ENCODE measurements at regions of chr3 and their contacts with region 1.

Region 1: GRCh38 chr3:175558261-175558660 is 699.1 kb downstream of the NAALADL2 start:
- DNase-seq: no peak
- ATAC-seq: no peak
- H3K4me3 ChIP-seq: no peak overlapping the region
- H3K4me3 Mint-ChIP-seq: no peak overlapping the region
- H3K27ac ChIP-seq: no peak overlapping the region
- H3K27ac Mint-ChIP-seq: no peak overlapping the region
- H3K4me1 ChIP-seq: no peaks in the 10 kb centered on the region
- H3K4me1 Mint-ChIP-seq: no peaks in the 10 kb centered on the region
- H3K27me3 ChIP-seq: no peaks in the 10 kb centered on the region
- H3K27me3 Mint-ChIP-seq: no peaks in the 10 kb centered on the region

Region 2: GRCh38 chr3:175146258-175146657 is 412.0 kb before region 1 on chr3:
- CTCF ChIA-PET with region 1: no interaction called
- POLR2A ChIA-PET with region 1: interaction called in 1 of 2 experiments, 10 read pairs
- DNase-seq: no peak
- ATAC-seq: no peak
- H3K4me3 ChIP-seq: no peak overlapping the region
- H3K4me3 Mint-ChIP-seq: no peak overlapping the region
- H3K27ac ChIP-seq: no peak overlapping the region
- H3K27ac Mint-ChIP-seq: no peak overlapping the region
- H3K4me1 ChIP-seq: no peaks in the 10 kb centered on the region
- H3K4me1 Mint-ChIP-seq: no peaks in the 10 kb centered on the region
- H3K27me3 ChIP-seq: no peaks in the 10 kb centered on the region
- H3K27me3 Mint-ChIP-seq: no peaks in the 10 kb centered on the region

Region 3: DNA sequence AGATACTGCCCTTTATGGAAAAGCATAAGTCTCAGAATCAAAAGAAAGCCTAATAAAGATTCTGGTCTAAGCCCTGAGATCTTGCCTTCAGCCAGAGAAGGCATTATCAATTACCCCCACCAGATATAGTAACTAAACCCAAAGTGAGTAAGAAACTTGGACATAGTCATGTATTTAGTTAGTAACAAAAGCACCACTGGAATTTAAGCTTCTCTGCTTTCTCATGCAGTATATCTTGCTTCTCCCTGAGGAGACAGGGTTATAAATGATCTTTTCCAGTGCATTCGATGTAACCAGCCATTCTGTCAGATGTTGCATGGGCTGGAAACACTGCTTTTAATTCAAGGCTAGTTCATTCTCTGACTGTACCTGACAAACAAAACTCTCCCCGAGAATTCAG is 247.6 kb after region 1 on chr3:
- CTCF ChIA-PET with region 1: no interaction called
- POLR2A ChIA-PET with region 1: no interaction called
- DNase-seq: no peak
- ATAC-seq: no peak
- H3K4me3 ChIP-seq: no peak overlapping the region
- H3K4me3 Mint-ChIP-seq: no peak overlapping the region
- H3K27ac ChIP-seq: no peak overlapping the region
- H3K27ac Mint-ChIP-seq: no peak overlapping the region
- H3K4me1 ChIP-seq: no peaks in the 10 kb centered on the region
- H3K4me1 Mint-ChIP-seq: no peaks in the 10 kb centered on the region
- H3K27me3 ChIP-seq: no peaks in the 10 kb centered on the region
- H3K27me3 Mint-ChIP-seq: no peaks in the 10 kb centered on the region

Region 4: DNA sequence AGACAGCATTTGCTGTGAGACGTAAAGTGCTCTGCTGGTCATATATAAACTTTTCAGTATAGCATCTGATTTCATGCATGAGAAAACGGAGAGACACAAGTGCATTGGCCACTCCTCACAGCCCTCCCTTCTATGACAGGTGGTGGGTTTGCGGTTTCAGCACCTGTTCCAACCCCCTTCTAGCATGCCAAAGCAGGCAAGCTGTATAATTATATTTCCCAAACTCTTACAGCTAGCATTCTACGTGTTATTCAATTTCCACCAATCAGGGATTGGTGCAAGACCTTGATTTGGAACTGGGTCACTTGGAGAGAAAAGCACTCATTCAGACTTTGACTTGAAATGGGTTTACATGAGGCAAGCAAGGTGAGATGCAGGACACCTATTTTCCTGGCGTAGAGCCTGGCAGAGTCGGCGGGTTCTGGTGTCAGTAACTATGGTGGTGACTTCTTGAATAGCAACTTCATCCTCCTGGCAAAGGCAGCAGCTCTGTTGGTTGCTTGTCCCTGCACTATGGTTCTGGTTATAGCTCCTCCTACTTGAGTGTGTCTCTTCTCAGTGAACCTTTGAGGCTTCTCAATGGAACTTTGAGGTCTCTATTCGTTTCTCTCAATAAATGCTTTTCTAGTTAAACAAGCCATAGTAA is 1282.5 kb after region 1 on chr3:
- CTCF ChIA-PET with region 1: interaction called in 1 of 2 experiments, 10 read pairs
- POLR2A ChIA-PET with region 1: no interaction called
- DNase-seq: no peak
- ATAC-seq: no peak
- H3K4me3 ChIP-seq: no peak overlapping the region
- H3K4me3 Mint-ChIP-seq: no peak overlapping the region
- H3K27ac ChIP-seq: no peak overlapping the region
- H3K27ac Mint-ChIP-seq: no peak overlapping the region
- H3K4me1 ChIP-seq: no peaks in the 10 kb centered on the region
- H3K4me1 Mint-ChIP-seq: no peaks in the 10 kb centered on the region
- H3K27me3 ChIP-seq: no peaks in the 10 kb centered on the region
- H3K27me3 Mint-ChIP-seq: peaks cover 0 to 3% of the 10 kb centered on the region in 2 donors

Measured in T-cell (primary cell).